Posterior vena cava (tissue), 2 donors: ENCODE measurements at regions of chr4 and their contacts with region 1.

Region 1: DNA sequence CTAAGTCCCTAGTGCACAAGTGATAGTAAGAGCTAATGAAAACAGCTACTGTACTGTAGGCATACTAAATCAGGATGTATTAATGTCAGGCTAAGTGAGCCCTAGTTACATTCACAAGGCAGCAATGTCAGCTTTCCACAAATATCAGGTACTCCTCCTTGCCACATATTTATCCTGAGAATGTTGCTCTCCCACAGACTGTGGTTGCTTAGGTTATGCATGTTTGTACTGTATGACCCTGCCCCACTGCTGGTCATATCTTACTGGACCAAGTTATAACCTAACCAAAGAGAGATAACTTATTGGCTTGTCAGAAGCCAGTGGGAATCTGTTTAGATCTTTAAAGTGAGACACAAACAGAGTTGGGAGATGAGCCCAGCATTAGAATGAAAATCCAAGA is 241.0 kb downstream of the SLC39A8 start:
- DNase-seq: no peak

Region 2: DNA sequence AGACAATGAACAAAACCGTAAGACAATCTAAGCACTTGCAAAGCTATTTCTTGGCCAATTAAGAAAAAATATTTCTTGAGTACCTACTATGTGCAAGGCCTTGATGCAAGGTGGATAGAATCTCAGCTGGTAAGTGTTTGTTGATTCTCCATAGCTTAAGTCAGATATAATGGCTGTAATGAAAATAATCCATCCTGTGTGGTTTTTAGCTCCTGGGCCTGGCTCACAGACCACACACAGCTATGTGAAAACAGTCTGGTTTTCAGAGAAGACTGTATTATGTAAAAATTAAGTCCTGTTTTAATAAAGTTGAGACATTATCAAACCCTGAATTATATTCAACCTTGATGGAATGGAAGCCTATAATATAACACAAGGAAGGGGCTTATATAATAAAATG is 1906.2 kb before region 1 on chr4:
- intact Hi-C with region 1: loop called in 1 of 2 experiments (anchors 5 kb)
- DNase-seq: no peak

Region 3: GRCh38 chr4:102157984-102158383 is 53.7 kb after region 1 on chr4:
- intact Hi-C with region 1: no loop called
- DNase-seq: no peak